ENCODE measurements at regions of chr15 and their contacts with region 1.

Region 1: GRCh38 chr15:90221246-90221900 is 12.4 kb downstream of the CIB1 start:
- DNase-seq: peak; percentile 52 to 67 (median 59)
- H3K4me3 ChIP-seq: no peak overlapping the region
- H3K27ac ChIP-seq: no peak overlapping the region
- H3K4me1 ChIP-seq: no peaks in the 10 kb centered on the region
- H3K27me3 ChIP-seq: no peaks in the 10 kb centered on the region

Region 2: GRCh38 chr15:90143166-90143655 is 78.2 kb before region 1 on chr15:
- CTCF ChIA-PET with region 1: interaction called, 14 read pairs
- POLR2A ChIA-PET with region 1: no interaction called
- DNase-seq: peak; percentile 77 to 88 (median 83)
- H3K4me3 ChIP-seq: no peak overlapping the region
- H3K27ac ChIP-seq: peak overlapping the region in 1 of 2 experiments; percentile 70
- H3K4me1 ChIP-seq: peaks cover 0 to 14% (median 5%) of the 10 kb centered on the region in 4 experiments
- H3K27me3 ChIP-seq: no peaks in the 10 kb centered on the region

Region 3: GRCh38 chr15:90151989-90152645 is 69.3 kb before region 1 on chr15:
- CTCF ChIA-PET with region 1: interaction called, 17 read pairs
- POLR2A ChIA-PET with region 1: no interaction called
- DNase-seq: no peak
- H3K4me3 ChIP-seq: no peak overlapping the region
- H3K27ac ChIP-seq: no peak overlapping the region
- H3K4me1 ChIP-seq: peaks cover 0 to 8% (median 0%) of the 10 kb centered on the region in 4 experiments
- H3K27me3 ChIP-seq: no peaks in the 10 kb centered on the region

Region 4: DNA sequence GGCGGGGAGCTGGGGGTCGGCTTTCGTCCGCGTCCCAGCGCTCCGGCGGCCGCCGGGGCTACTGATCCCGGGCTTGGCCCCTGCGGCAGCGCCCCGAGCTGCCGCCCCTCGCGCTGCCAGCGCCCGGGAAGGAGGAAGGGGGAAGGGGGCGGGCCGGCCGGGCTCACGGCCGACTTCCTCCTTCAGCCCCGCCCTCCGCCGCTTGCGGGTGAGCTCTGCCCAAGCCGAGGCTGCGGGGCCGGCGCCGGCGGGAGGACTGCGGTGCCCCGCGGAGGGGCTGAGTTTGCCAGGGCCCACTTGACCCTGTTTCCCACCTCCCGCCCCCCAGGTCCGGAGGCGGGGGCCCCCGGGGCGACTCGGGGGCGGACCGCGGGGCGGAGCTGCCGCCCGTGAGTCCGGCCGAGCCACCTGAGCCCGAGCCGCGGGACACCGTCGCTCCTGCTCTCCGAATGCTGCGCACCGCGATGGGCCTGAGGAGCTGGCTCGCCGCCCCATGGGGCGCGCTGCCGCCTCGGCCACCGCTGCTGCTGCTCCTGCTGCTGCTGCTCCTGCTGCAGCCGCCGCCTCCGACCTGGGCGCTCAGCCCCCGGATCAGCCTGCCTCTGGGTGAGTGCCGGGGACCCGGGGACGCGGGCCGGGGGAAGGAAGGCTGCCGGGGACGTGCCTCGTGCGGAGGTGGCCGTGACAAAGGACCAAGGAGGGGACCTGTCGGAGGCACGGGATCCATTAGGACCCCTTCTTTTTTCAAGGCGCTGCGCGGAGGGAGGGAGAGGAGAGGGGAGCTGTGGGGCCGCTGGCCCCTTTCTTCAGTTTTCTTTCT is 20.0 kb before region 1 on chr15 and contains the start of gene SEMA4B:
- CTCF ChIA-PET with region 1: interaction called, 13 read pairs
- POLR2A ChIA-PET with region 1: no interaction called
- DNase-seq: peak; percentile 62 to 86 (median 76)
- H3K4me3 ChIP-seq: peak within 1 kb of the TSS; percentile 35 to 89 (median 79)
- H3K27ac ChIP-seq: peak within 1 kb of the TSS in 1 of 2 experiments; percentile 54
- H3K4me1 ChIP-seq: peaks cover 4 to 21% (median 17%) of the 10 kb centered on the region in 4 experiments
- H3K27me3 ChIP-seq: peaks cover 0 to 7% (median 0%) of the 10 kb centered on the region in 5 experiments

Region 5: GRCh38 chr15:90209591-90209990 is 11.8 kb before region 1 on chr15:
- CTCF ChIA-PET with region 1: interaction called, 13 read pairs
- POLR2A ChIA-PET with region 1: interaction called, 3 read pairs
- DNase-seq: no peak
- H3K4me3 ChIP-seq: no peak overlapping the region
- H3K27ac ChIP-seq: no peak overlapping the region
- H3K4me1 ChIP-seq: peaks cover 0 to 37% (median 27%) of the 10 kb centered on the region in 4 experiments
- H3K27me3 ChIP-seq: no peaks in the 10 kb centered on the region

Region 6: GRCh38 chr15:90233376-90234095 is 12.2 kb after region 1 on chr15 and contains the start of gene CIB1:
- CTCF ChIA-PET with region 1: interaction called, 26 read pairs
- POLR2A ChIA-PET with region 1: no interaction called
- DNase-seq: peak; percentile 95 to 98 (median 98)
- H3K4me3 ChIP-seq: peak within 1 kb of the TSS; percentile 76 to 88 (median 88)
- H3K27ac ChIP-seq: peak within 1 kb of the TSS; percentile 75 to 85
- H3K4me1 ChIP-seq: peaks cover 7 to 34% (median 22%) of the 10 kb centered on the region in 4 experiments
- H3K27me3 ChIP-seq: no peaks in the 10 kb centered on the region

Measured in common myeloid progenitor, CD34-positive (primary cell).